CD4-positive, alpha-beta memory T cell (primary cell): ENCODE measurements at regions of chr3 and their contacts with region 1.

Region 1: DNA sequence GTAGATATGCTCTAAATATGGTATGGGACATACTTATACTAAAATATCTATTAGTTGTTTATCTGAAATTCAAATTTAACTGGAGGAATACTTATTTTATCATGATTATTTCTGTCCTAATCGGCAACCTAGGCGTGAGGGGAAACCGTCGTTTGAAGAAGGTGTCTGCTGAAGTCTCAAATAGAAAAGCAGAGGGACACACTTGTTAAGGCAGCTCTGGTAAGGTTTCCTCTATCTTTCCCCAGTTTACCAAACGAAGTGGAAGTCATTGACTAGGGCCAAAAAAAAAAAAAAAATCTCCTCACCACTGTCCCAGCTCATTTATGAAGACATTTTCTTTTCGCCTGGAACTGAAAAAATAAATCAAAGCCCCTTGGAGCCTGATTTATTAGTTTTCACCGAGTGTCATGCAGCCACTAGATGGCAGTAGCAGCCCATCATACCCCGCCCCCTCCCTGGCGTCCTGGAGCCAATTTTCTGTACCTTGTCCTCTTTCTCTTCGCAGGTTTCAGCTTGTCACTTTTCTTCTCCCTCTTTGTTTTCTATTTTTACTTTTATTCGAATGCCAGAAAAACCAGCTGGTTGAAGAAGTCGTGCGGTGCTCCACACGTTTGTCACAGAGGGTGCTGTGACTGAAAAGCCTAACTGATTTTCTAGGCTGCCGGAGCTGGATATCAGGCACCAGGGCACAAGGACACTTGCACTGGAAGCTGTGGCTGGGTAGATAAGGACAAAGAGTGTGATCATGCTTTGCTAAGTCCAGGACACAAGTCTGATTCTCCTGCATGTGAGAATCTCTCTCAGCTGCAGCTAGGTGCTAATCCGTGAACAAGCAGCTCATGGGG is 238.7 kb downstream of the ZPLD1 start:
- DNase-seq: peak; percentile 26 to 38 (median 32)
- H3K4me3 ChIP-seq: no peak overlapping the region
- H3K4me3 Mint-ChIP-seq: peak overlapping the region in 2 of 8 donors; percentile 11 to 67
- H3K27ac ChIP-seq: no peak overlapping the region
- H3K27ac Mint-ChIP-seq: no peak overlapping the region
- H3K4me1 ChIP-seq: no peaks in the 10 kb centered on the region
- H3K4me1 Mint-ChIP-seq: no peaks in the 10 kb centered on the region
- H3K27me3 ChIP-seq: peaks cover 5% of the 10 kb centered on the region
- H3K27me3 Mint-ChIP-seq: peaks cover 9 to 11% of the 10 kb centered on the region in 2 donors

Region 2: DNA sequence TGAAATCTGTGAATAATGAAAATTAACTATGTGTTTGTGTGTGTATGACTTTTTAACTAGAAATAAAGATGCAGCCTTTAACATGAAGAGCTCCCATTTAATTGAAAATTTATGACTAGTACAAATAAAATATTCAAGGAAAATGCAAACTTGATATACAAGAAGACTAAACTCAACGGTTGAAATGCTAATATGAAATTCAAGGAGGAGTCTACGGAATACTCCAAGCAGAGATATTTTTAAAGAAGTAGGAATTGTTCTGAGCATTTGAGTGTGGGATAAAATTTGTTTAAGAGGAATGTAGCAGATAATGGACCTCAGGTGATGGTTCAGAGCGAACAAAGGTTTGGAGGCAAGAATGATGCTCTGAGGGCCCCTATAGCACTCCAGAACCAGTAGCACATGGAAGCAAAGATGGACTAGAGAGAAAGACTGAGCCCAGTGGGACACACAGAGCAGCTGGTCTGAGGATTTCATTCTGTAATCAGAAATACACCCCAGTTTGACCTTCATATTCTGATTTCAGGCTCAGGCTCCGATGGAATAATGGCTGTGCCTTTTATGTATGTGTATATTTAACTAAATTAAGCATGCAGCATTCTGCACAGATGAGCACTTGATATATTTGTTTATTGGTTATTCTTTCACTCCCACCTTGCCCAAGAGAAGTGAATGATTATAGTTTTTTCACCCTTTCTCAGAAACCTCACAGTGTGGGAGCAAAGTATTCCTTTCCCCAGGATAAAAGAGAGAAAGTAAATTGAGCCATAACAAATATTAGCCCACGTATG is 11.6 kb before region 1 on chr3:
- CTCF ChIA-PET with region 1: interaction called, 17 read pairs
- POLR2A ChIA-PET with region 1: interaction called, 3 read pairs
- intact Hi-C with region 1: no loop called
- DNase-seq: no peak
- H3K4me3 ChIP-seq: no peak overlapping the region
- H3K4me3 Mint-ChIP-seq: no peak overlapping the region
- H3K27ac ChIP-seq: no peak overlapping the region
- H3K27ac Mint-ChIP-seq: no peak overlapping the region
- H3K4me1 ChIP-seq: no peaks in the 10 kb centered on the region
- H3K4me1 Mint-ChIP-seq: no peaks in the 10 kb centered on the region
- H3K27me3 ChIP-seq: no peaks in the 10 kb centered on the region
- H3K27me3 Mint-ChIP-seq: peaks cover 3 to 13% of the 10 kb centered on the region in 2 donors

Region 3: GRCh38 chr3:102687851-102688555 is 14.5 kb after region 1 on chr3:
- CTCF ChIA-PET with region 1: interaction called, 27 read pairs
- POLR2A ChIA-PET with region 1: no interaction called
- intact Hi-C with region 1: no loop called
- DNase-seq: no peak
- H3K4me3 ChIP-seq: no peak overlapping the region
- H3K4me3 Mint-ChIP-seq: no peak overlapping the region
- H3K27ac ChIP-seq: no peak overlapping the region
- H3K27ac Mint-ChIP-seq: no peak overlapping the region
- H3K4me1 ChIP-seq: no peaks in the 10 kb centered on the region
- H3K4me1 Mint-ChIP-seq: no peaks in the 10 kb centered on the region
- H3K27me3 ChIP-seq: no peaks in the 10 kb centered on the region
- H3K27me3 Mint-ChIP-seq: peaks cover 8 to 12% of the 10 kb centered on the region in 2 donors

Region 4: DNA sequence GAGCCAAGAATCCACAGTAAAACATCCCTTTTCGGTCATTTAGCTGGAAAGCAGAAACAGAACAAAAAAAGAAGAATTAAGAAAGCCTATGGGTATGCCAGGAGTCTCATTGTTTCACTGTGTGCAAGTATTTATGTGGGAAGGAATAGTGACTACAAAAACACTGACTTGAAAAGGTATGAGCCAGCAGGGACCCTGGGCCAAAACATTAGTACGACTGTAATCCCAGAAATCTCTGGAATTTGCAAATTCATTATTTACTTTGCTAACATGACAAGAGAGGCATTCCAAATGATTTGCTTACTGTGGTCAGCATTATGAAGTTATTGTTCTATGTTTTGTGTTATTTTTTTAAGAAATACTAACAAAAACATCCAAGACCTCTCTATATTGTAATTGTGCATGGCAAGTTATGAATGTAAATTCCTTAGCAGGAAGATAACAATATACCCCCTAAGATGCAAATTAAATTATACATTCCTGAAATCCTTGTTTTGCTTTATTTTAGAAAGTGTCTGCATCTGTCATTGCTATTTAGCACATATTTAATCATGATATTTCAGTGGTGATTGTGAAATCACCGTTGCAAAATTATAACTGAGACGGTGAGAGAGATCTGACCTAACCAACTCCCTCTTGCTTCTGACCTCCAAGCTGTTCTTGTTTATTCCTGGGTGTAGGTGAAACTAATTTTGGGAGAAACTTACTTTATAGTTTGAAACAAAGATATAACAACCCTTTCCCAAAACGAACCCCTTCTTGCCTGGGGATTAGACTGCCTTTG is 60.5 kb after region 1 on chr3:
- CTCF ChIA-PET with region 1: no interaction called
- POLR2A ChIA-PET with region 1: no interaction called
- intact Hi-C with region 1: no loop called
- DNase-seq: no peak
- H3K4me3 ChIP-seq: no peak overlapping the region
- H3K4me3 Mint-ChIP-seq: no peak overlapping the region
- H3K27ac ChIP-seq: no peak overlapping the region
- H3K27ac Mint-ChIP-seq: no peak overlapping the region
- H3K4me1 ChIP-seq: no peaks in the 10 kb centered on the region
- H3K4me1 Mint-ChIP-seq: no peaks in the 10 kb centered on the region
- H3K27me3 ChIP-seq: no peaks in the 10 kb centered on the region
- H3K27me3 Mint-ChIP-seq: no peaks in the 10 kb centered on the region